ENCODE measurements at regions of chr3 and their contacts with region 1.

Region 1: DNA sequence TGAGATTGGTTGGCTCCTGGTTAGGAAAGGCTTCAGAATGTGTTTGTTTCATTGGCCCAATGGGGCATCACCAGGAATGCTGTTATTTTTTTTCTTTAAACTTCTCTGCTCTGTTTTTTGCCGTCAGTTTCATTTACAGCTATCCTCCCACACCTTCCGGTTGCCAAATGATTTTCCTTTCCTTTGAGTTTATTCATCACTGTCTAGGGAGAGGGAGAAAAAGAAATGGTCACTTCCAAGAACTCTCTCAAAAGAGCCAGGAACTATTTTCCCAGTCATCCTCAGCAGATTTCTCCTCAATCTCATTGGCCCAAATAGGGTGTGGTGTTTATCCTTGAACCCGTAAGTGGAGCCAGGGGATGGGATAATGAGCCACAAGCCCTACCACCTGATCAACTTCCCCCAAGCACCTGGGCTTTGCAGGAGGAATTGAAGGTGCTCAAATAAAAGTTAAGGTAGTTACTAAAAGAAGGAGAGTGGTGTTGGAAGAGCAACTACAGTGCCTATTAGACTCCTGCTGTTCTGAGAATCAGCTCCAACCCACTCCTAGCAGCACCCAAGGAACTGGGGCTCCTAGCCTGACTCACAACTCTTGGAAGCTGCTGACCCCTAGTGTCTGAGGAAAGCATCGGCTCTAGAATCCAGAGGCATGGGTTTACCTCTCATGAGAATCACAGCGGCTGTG is 183.8 kb upstream of the IL12A start:
- DNase-seq: peak; percentile 80
- H3K4me3 ChIP-seq: no peak overlapping the region
- H3K27ac ChIP-seq: no peak overlapping the region
- H3K4me1 ChIP-seq: no peaks in the 10 kb centered on the region
- H3K27me3 ChIP-seq: no peaks in the 10 kb centered on the region
- CTCF ChIP-seq: peak; percentile 74

Region 2: GRCh38 chr3:159260049-159260662 is 544.7 kb before region 1 on chr3:
- intact Hi-C with region 1: loop called (anchors 5 kb)
- DNase-seq: peak; percentile 58
- H3K4me3 ChIP-seq: no peak overlapping the region
- H3K27ac ChIP-seq: no peak overlapping the region
- H3K4me1 ChIP-seq: no peaks in the 10 kb centered on the region
- H3K27me3 ChIP-seq: no peaks in the 10 kb centered on the region
- CTCF ChIP-seq: peak; percentile 47

Region 3: DNA sequence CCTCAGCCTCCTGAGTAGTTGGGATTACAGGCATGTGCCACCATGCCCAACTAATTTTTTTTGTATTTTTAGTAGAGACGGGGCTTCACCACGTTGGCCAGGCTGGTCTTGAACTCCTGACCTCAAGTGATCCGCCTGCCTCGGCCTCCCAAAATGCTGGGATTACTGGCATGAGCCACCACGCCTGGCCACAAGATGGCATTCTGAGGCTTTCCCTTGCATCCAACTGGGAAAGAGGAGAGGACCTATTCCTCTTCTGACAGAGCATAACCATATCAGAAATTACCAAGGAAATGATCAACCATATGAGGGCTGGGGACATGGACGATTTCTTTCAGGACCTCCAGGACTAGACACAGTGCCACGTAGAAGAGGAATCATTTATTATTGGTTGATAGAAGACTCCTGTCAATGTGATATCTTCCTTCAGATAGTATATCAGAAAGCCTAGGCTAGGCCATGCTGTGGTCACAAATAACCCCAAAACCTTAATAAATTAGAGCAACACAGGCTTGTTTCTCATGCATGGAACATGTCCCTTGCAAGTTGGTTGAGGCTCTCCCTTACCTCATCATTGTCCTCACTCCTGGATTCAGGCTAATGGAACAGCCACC is 188.5 kb before region 1 on chr3:
- intact Hi-C with region 1: loop called (anchors 5 kb)
- DNase-seq: peak; percentile 58
- H3K4me3 ChIP-seq: no peak overlapping the region
- H3K27ac ChIP-seq: no peak overlapping the region
- H3K4me1 ChIP-seq: no peaks in the 10 kb centered on the region
- H3K27me3 ChIP-seq: no peaks in the 10 kb centered on the region
- CTCF ChIP-seq: peak; percentile 50

Region 4: DNA sequence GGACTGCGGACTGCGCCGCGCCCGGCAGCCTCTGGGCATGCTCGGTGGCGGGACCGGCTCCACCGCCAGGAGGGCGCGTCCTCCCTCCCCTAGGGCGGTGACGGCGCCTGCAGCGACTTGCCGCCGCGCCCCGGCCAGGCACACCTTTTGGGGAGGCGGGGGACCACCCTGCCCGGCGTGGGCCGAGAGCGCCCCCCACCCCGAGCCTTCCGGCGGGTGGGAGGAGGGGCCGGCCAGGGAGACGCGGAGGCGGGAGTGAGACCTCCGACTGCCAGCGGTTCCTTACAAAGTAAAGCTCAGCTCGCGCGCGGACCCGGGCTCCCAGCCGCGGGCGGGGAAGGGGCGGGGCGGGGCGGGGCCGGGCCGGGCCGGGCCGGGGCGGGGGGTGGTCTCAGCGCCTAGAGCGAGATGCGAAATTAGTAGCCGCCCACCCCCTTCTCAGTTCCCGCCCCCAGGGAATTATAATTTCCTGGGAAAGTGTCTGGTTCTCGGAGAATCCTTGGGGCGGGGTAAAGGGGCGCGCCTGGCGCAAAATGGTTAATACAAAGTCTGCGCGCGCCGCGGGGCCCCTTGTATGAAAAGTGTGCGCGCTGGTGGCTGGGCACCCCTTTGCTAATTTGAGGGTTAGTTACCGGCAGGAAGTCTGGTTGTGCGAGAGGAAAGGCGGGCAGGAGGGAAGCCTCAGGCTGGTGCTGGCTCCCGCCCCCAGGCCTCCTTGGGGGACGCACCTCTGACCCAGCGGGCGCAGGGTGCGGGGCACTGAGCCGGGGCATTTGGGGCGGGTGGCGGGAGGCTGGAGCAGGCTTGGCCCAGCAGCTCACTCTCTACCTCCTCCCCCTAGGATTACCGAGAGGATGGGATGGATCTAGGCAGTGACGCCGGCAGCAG is 41.0 kb before region 1 on chr3:
- intact Hi-C with region 1: loop called (anchors 5 kb)
- DNase-seq: peak; percentile 82
- H3K4me3 ChIP-seq: peak overlapping the region; percentile 55
- H3K27ac ChIP-seq: peak overlapping the region; percentile 88
- H3K4me1 ChIP-seq: peaks cover 4% of the 10 kb centered on the region
- H3K27me3 ChIP-seq: peaks cover 7% of the 10 kb centered on the region
- CTCF ChIP-seq: no peak

Region 5: GRCh38 chr3:160355826-160356225 is 551.0 kb after region 1 on chr3:
- intact Hi-C with region 1: no loop called
- DNase-seq: no peak
- H3K4me3 ChIP-seq: no peak overlapping the region
- H3K27ac ChIP-seq: no peak overlapping the region
- H3K4me1 ChIP-seq: no peaks in the 10 kb centered on the region
- H3K27me3 ChIP-seq: no peaks in the 10 kb centered on the region
- CTCF ChIP-seq: no peak

Measured in colonic mucosa (tissue), 4 donors.